Panc1 (cell line): ENCODE measurements at regions of chr19 and their contacts with region 1.

Region 1: DNA sequence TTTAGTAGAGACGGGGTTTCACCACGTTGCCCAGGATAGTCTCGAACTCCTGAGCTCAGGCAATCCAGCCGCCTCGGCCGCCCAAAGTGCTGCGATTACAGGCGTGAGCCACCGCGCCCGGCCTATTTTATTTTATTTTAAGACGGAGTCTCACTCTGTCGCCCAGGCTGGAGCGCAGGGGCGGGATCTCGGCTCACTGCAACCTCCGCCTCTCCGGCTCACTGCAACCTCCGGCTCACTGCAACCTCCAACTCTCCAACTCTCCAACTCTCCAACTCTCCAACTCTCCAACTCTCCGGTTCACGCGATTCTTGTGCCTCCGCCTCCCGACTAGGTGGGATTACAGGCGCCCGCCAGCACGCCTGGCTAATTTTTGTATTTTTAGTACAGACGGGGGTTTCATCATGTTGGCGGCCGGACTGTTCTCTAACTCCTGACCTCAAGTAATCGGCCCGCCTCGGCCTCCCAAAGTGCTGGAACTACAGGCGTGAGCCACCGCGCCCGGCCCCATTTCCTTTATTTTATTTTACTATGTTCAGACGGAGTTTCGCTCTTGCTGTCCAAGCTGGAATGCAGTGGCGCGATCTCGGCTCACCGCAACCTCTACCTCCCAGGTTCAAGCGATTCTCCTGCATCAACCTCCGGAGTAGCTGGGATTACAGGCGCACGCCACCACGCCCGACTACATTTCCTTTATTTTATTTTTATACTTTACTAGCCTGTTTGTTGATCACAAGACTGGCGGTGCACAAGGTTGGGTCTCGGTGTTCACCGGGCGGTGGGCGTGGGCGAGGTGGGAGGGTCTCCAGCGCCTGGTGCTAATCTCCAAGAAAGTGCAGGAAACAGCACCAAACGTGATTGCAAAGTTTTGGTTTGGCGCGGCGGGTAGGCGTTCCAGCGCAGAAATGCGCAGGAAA is 23.7 kb upstream of the ZNF850 start:
- DNase-seq: no peak
- ATAC-seq: no peak
- H3K4me3 ChIP-seq: peak overlapping the region; percentile 77 to 85
- H3K27ac ChIP-seq: peak overlapping the region; percentile 91
- H3K4me1 ChIP-seq: 0 out of 2 replicates have a peak, but pooled peaks cover 5% of the 10 kb centered on the region
- H3K27me3 ChIP-seq: no peaks in the 10 kb centered on the region
- CTCF ChIP-seq: no peak

Region 2: GRCh38 chr19:36672368-36672767 is 124.0 kb before region 1 on chr19:
- CTCF ChIA-PET with region 1: no interaction called
- POLR2A ChIA-PET with region 1: interaction called, 17 read pairs
- in situ Hi-C with region 1: no loop called
- intact Hi-C with region 1: no loop called
- DNase-seq: no peak
- ATAC-seq: no peak
- H3K4me3 ChIP-seq: no peak overlapping the region
- H3K27ac ChIP-seq: no peak overlapping the region
- H3K4me1 ChIP-seq: peaks cover 9% of the 10 kb centered on the region; the same call in 1 of the 2 replicates
- H3K27me3 ChIP-seq: no peaks in the 10 kb centered on the region
- CTCF ChIP-seq: no peak

Region 3: DNA sequence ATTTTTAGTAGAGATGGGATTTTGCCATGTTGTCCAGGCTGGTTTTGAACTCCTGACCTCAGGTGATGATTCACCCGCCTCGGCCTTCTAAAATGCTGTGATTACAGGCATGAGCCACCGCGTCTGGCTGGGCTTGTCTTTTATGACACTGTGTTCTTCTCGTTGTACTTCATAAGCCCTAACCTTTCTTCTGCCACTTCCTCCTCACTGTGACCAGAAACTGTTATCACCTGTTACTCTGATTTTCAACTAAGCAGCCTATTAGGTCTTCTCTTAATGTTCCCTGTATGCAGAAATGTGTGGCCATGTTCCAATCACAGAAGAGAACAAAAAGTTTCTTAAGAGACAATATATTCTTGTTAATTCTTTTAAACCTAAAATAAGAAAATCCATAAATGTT is 25.4 kb after region 1 on chr19:
- CTCF ChIA-PET with region 1: no interaction called
- POLR2A ChIA-PET with region 1: no interaction called
- in situ Hi-C with region 1: no loop called
- intact Hi-C with region 1: no loop called
- DNase-seq: no peak
- ATAC-seq: no peak
- H3K4me3 ChIP-seq: no peak overlapping the region
- H3K27ac ChIP-seq: no peak overlapping the region
- H3K4me1 ChIP-seq: no peaks in the 10 kb centered on the region
- H3K27me3 ChIP-seq: no peaks in the 10 kb centered on the region
- CTCF ChIP-seq: no peak